ENCODE measurements at regions of chr19 and their contacts with region 1.

Region 1: DNA sequence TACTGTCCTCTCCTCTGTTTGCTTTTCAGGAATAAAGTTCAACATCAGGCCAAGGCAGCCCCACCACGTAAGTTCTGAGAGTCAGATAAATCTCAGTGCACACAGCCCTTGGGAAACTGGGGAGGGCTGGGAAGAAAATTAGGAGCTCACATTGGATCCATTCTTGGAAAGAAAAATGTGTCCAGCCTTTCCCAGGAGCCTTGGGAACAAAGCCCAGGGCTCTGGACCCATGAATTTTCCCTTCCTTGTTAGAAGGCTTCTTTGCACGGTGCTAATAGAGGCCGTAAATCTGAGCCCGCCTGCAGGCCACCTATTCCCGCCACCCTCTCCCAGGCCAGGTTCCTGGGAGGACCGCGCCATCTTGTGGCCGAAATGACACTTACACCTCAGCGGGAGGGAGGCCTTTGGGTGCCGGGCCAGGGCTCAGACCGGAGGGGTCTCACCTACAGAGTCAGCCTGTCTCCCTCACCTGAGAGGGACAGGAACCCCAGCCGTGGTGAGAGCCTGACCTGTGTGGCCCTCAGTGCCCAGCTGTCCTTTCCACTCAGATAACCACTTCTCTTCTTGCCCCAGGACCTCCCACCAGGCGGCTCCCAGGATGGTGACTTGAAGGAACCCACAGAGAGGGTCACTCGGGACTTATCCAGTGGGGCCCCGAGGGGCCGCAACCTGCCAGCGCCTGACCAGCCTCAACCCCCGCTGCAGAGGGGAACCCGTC is 25.1 kb upstream of the KCTD15 start:
- DNase-seq: no peak
- H3K4me3 ChIP-seq: no peak overlapping the region
- H3K27ac ChIP-seq: no peak overlapping the region
- H3K4me1 ChIP-seq: no peaks in the 10 kb centered on the region
- H3K27me3 ChIP-seq: peaks cover 0 to 85% (median 2%) of the 10 kb centered on the region in 4 donors
- CTCF ChIP-seq: peak; percentile 74 to 87 (median 80)
- EP300 ChIP-seq: no peak
- POLR2A ChIP-seq: no peak

Region 2: GRCh38 chr19:33430674-33431277 is 340.8 kb before region 1 on chr19:
- intact Hi-C with region 1: loop called (anchors 2 kb)
- DNase-seq: no peak
- H3K4me3 ChIP-seq: no peak overlapping the region
- H3K27ac ChIP-seq: no peak overlapping the region
- H3K4me1 ChIP-seq: peaks cover 0 to 8% (median 2%) of the 10 kb centered on the region in 4 donors
- H3K27me3 ChIP-seq: no peaks in the 10 kb centered on the region
- CTCF ChIP-seq: peak; percentile 47 to 65 (median 56)
- EP300 ChIP-seq: no peak
- POLR2A ChIP-seq: no peak

Region 3: GRCh38 chr19:33690378-33691029 is 81.0 kb before region 1 on chr19:
- intact Hi-C with region 1: no loop called
- DNase-seq: no peak
- H3K4me3 ChIP-seq: no peak overlapping the region
- H3K27ac ChIP-seq: no peak overlapping the region
- H3K4me1 ChIP-seq: no peaks in the 10 kb centered on the region
- H3K27me3 ChIP-seq: peaks cover 0 to 51% (median 8%) of the 10 kb centered on the region in 4 donors
- CTCF ChIP-seq: no peak
- EP300 ChIP-seq: no peak
- POLR2A ChIP-seq: no peak

Measured in esophagus muscularis mucosa (tissue), 4 donors.